Calu3 (cell line): ENCODE measurements at regions of chr3 and their contacts with region 1.

Region 1: GRCh38 chr3:11568503-11569155 is 75.1 kb downstream of the VGLL4 start:
- DNase-seq: peak; percentile 76
- H3K4me3 Mint-ChIP-seq: peak overlapping the region; percentile 68
- H3K27ac Mint-ChIP-seq: peak overlapping the region; percentile 86
- H3K4me1 Mint-ChIP-seq: peaks cover 17% of the 10 kb centered on the region
- H3K27me3 Mint-ChIP-seq: no peaks in the 10 kb centered on the region
- CTCF ChIP-seq: no peak

Region 2: GRCh38 chr3:11530153-11530721 is 38.4 kb before region 1 on chr3:
- CTCF ChIA-PET with region 1: no interaction called
- intact Hi-C with region 1: no loop called
- DNase-seq: no peak
- H3K4me3 Mint-ChIP-seq: no peak overlapping the region
- H3K27ac Mint-ChIP-seq: no peak overlapping the region
- H3K4me1 Mint-ChIP-seq: no peaks in the 10 kb centered on the region
- H3K27me3 Mint-ChIP-seq: no peaks in the 10 kb centered on the region
- CTCF ChIP-seq: no peak

Region 3: DNA sequence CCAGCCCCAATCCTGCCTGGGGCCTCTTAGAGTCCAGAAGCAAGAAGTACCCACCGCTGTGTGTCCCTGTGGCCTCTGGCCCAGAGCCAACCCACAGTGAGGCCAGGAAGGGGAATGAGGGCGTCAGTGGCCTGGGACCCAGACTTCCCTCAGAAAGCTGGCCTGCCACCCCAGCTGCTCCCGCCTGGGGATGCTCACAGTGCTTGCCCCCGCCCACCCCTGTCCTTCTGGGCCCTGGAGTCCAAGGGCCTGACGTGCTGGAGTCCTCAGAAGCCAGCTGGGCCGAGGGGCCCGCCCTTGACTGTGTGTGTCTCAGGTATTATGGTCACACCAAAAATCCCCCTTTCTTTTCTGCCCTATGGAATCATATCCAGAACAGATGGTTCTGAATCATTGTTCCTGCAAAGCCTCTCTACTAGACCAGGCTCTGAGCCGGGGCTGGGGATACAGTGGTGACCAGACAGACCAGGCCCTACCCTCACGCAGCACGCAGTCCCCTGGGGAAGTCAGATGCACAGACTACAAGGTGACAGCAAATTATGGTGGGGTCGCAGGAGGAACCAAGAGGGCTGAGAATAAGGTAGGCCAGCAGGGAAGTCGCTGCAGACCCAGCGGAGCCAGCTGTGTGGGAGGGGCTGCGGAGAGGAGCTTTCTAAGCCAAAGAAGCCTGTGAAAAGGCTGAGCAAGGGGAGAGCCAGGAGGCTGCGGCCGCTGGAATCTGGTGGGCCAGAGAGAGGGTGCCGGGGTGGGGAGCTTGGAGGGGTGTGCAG is 24.0 kb before region 1 on chr3:
- CTCF ChIA-PET with region 1: no interaction called
- intact Hi-C with region 1: no loop called
- DNase-seq: peak; percentile 17
- H3K4me3 Mint-ChIP-seq: no peak overlapping the region
- H3K27ac Mint-ChIP-seq: no peak overlapping the region
- H3K4me1 Mint-ChIP-seq: peaks cover 8% of the 10 kb centered on the region
- H3K27me3 Mint-ChIP-seq: no peaks in the 10 kb centered on the region
- CTCF ChIP-seq: no peak

Region 4: DNA sequence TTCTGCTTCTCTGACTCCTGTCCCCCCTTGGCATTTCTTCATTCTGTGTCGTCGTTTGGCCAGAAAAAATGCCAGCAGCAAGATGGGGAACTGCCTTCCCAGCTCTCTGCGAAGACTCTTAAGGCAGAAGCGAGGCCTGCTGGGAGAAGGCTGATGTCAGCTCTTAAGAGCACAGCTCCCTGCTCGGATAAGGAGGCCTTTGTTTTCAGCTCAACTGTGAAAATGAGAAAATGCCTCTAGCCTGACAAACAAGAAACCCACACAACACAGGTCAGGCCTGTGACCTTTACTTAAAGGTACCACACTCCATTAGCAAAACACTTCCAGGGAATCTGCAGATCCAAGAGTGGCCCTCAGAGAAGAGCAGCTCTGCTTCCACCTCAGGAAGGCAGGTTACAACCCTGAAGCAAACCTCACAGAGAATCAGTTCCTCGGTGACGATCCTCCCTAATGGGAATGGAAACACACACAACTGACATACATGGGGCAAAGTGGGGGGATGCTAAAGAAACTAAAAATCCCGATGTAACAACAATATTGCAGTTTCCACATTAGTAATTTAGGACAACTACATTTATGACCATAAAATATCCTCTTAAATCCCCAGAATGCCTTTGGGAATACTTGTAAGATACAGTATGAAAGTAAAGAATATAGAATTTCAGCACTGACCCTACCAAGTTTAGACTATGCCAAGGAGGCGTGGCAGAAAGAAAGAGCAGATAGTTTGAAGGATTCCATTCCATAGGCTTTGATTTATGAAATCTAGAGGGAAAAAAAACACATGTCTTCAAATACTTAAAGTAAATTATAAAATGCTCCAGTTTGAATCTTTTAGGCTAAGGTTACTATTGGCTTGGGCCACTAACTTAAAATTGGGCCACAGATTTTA is 23.0 kb after region 1 on chr3:
- CTCF ChIA-PET with region 1: interaction called, 11 read pairs
- intact Hi-C with region 1: no loop called
- DNase-seq: peak; percentile 72
- H3K4me3 Mint-ChIP-seq: peak overlapping the region; percentile 52
- H3K27ac Mint-ChIP-seq: peak overlapping the region; percentile 50
- H3K4me1 Mint-ChIP-seq: peaks cover 60% of the 10 kb centered on the region
- H3K27me3 Mint-ChIP-seq: no peaks in the 10 kb centered on the region
- CTCF ChIP-seq: no peak

Region 5: DNA sequence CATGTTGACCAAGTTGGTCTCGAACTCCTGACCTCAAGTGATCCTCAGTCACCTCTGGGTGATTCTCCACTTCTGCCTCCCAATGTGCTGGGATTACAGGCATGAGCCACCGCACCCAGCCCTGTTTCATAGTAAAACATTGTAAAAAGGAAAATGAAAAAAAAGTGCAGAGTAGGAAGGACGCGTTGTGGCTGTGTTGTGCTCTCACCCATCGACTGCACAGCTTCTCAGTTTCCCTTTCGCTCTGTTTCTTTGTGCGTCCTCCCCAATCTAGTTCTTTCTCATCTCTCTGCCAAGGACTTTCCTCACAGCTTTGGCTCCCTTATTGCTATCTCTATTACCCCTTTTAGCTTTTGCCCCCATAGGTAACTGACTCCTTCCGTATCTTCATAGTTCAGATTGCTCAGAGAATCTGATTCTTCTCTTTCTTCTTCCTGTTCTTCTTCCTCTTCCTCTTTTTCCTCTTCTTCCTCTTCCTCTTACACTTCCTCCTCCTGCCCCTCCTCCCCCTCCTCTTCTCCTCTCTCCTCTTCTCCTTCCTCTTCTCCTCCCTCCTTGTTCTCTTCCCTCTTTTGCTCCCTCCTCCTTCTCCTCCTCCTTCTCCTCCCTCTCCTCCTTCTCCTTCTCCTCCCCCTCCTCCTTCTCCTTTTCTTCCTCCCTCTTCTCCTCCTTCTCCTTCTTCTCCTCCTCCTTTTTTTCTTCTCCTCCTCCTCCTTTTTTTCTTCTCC is 156.2 kb after region 1 on chr3:
- CTCF ChIA-PET with region 1: no interaction called
- intact Hi-C with region 1: no loop called
- DNase-seq: no peak
- H3K4me3 Mint-ChIP-seq: no peak overlapping the region
- H3K27ac Mint-ChIP-seq: no peak overlapping the region
- H3K4me1 Mint-ChIP-seq: peaks cover 25% of the 10 kb centered on the region
- H3K27me3 Mint-ChIP-seq: peaks cover 25% of the 10 kb centered on the region
- CTCF ChIP-seq: no peak